ENCODE measurements at regions of chr5 and their contacts with region 1.

Region 1: DNA sequence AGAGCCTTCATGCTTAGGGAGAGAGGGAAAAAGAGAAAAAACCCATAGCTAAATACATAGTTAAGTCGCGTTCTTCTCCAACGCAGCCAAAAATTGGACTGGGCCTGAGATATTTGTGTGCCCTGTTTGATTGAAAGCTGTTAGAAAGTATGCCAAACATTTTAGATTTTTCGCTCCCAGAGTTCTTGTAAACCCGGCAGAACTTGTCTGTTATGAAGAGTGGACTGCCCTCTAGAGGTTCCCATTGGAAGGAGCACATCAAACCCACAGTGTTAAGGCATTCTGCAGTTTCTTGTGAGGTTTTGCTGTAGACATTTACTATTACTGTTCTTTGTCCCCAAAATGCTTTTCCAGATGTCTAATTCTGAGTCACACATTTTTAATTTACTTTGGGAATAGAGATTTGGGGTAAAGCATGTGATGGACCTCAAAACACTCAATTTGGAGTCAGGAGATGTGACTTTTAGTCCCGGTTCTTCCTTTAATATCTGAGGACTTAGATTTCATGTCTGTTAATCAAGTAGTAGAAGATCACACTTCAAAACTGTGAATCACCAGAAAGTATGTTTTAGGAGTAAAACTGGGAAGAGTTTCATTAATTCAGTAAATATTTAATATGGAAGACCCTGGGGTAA is 96.6 kb downstream of the PCSK1 start:
- DNase-seq: peak; percentile 85
- ATAC-seq: peak; percentile 78
- H3K4me3 ChIP-seq: peak overlapping the region; percentile 40; the same call in 1 of the 2 replicates
- H3K27ac ChIP-seq: peak overlapping the region; percentile 82
- H3K4me1 ChIP-seq: peaks cover 43% of the 10 kb centered on the region
- H3K27me3 ChIP-seq: no peaks in the 10 kb centered on the region
- CTCF ChIP-seq: peak; percentile 84

Region 2: GRCh38 chr5:95781101-95781583 is 555.3 kb before region 1 on chr5:
- CTCF ChIA-PET with region 1: no interaction called
- POLR2A ChIA-PET with region 1: no interaction called
- intact Hi-C with region 1: loop called (anchors 2 kb)
- DNase-seq: peak; percentile 73
- ATAC-seq: peak; percentile 100
- H3K4me3 ChIP-seq: no peak overlapping the region
- H3K27ac ChIP-seq: no peak overlapping the region
- H3K4me1 ChIP-seq: no peaks in the 10 kb centered on the region
- H3K27me3 ChIP-seq: no peaks in the 10 kb centered on the region
- CTCF ChIP-seq: peak; percentile 95

Region 3: DNA sequence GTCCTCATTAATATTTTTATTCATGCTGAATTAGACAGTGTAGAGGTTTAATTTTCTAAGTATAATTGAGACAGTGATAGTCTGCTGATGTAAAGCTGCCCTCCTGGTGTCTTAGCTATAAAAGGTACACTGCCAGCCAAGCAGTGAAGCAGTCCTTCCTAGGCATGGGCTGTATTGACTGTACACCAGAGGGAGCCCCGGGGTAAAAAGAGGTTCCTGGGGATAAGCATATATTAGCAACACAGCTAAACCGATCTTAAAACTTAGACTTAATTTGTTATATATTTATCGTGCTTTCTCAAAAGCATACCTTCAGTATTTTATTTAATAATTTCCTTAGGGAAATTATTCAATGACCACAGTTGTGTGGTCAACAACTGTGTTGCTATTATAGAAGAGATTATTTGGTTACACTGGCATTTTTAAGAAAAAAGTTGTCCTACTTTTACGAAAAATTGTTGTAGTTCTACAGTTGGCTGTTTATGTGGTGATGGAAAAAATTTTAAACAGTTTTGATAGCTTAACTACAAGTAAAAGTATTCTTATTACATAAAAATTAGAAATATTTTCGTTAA is 443.6 kb before region 1 on chr5:
- CTCF ChIA-PET with region 1: no interaction called
- POLR2A ChIA-PET with region 1: no interaction called
- intact Hi-C with region 1: loop called (anchors 2 kb)
- DNase-seq: peak; percentile 56
- ATAC-seq: peak; percentile 62; the same call in 1 of the 2 replicates
- H3K4me3 ChIP-seq: no peak overlapping the region
- H3K27ac ChIP-seq: no peak overlapping the region
- H3K4me1 ChIP-seq: no peaks in the 10 kb centered on the region
- H3K27me3 ChIP-seq: no peaks in the 10 kb centered on the region
- CTCF ChIP-seq: peak; percentile 63

Region 4: GRCh38 chr5:96026406-96027041 is 309.9 kb before region 1 on chr5:
- CTCF ChIA-PET with region 1: no interaction called
- POLR2A ChIA-PET with region 1: no interaction called
- intact Hi-C with region 1: loop called (anchors 5 kb)
- DNase-seq: peak; percentile 82
- ATAC-seq: peak; percentile 84
- H3K4me3 ChIP-seq: peak overlapping the region; percentile 2; the same call in 1 of the 2 replicates
- H3K27ac ChIP-seq: peak overlapping the region; percentile 80
- H3K4me1 ChIP-seq: peaks cover 61% of the 10 kb centered on the region
- H3K27me3 ChIP-seq: no peaks in the 10 kb centered on the region
- CTCF ChIP-seq: no peak

Region 5: DNA sequence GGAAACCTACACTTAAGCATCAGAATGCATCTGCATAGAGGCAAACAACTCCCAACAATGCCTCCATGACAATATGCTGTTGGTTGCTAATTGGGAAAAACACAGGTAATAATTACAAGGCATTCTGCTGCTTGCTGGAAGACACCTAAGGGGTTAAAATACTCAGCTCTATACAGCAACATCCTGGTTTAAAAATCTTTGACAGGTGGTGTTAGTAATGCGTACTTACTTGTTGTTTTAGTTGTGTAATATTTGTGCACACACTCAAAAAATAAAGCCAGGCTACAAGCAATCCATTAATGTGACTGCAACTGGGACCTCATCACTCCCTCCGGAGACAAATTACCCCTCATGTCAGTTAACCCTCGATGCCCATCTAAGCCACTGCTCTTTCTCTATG is 248.5 kb before region 1 on chr5:
- CTCF ChIA-PET with region 1: no interaction called
- POLR2A ChIA-PET with region 1: no interaction called
- intact Hi-C with region 1: no loop called
- DNase-seq: no peak
- ATAC-seq: no peak
- H3K4me3 ChIP-seq: no peak overlapping the region
- H3K27ac ChIP-seq: no peak overlapping the region
- H3K4me1 ChIP-seq: peaks cover 23% of the 10 kb centered on the region
- H3K27me3 ChIP-seq: no peaks in the 10 kb centered on the region
- CTCF ChIP-seq: no peak

Region 6: GRCh38 chr5:96142786-96143434 is 193.6 kb before region 1 on chr5:
- CTCF ChIA-PET with region 1: no interaction called
- POLR2A ChIA-PET with region 1: no interaction called
- intact Hi-C with region 1: loop called (anchors 5 kb)
- DNase-seq: peak; percentile 28
- ATAC-seq: peak; percentile 48
- H3K4me3 ChIP-seq: no peak overlapping the region
- H3K27ac ChIP-seq: peak overlapping the region; percentile 71
- H3K4me1 ChIP-seq: peaks cover 35% of the 10 kb centered on the region
- H3K27me3 ChIP-seq: no peaks in the 10 kb centered on the region
- CTCF ChIP-seq: no peak

Region 7: GRCh38 chr5:96256778-96257470 is 79.5 kb before region 1 on chr5:
- CTCF ChIA-PET with region 1: interaction called, 3 read pairs
- POLR2A ChIA-PET with region 1: no interaction called
- intact Hi-C with region 1: loop called (anchors 1 kb)
- DNase-seq: peak; percentile 41
- ATAC-seq: no peak
- H3K4me3 ChIP-seq: no peak overlapping the region
- H3K27ac ChIP-seq: no peak overlapping the region
- H3K4me1 ChIP-seq: peaks cover 77% of the 10 kb centered on the region
- H3K27me3 ChIP-seq: no peaks in the 10 kb centered on the region
- CTCF ChIP-seq: 0 out of 2 replicates have a peak, but pooled peaks have one; percentile 13

Measured in PC-3 (cell line).